A673 (cell line): ENCODE measurements at regions of chr17 and their contacts with region 1.

Region 1: GRCh38 chr17:14843086-14843795 is 421.9 kb downstream of the PMP22 start:
- DNase-seq: no peak
- H3K4me3 ChIP-seq: no peak overlapping the region
- H3K27ac ChIP-seq: no peak overlapping the region
- H3K4me1 ChIP-seq: no peaks in the 10 kb centered on the region
- H3K27me3 ChIP-seq: no peaks in the 10 kb centered on the region
- CTCF ChIP-seq: no peak

Region 2: DNA sequence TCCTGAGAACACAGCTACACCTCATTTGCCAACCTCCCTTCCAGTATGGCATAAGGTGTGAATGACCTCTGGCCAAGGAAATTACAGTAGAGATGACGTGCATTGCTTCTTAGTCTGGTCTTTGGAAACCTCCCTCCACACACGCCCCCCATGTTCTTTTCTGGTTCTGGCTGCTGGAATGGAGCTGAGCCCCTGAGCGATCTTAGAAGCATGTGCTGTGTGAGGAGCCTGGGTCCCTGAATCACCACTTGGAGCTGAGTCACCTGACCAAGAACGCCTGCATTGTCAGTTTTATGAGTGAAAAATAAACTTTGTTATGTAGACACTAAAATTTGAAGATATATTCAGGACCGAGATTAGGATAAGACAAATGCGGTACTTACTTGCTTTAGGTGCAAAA is 1293.0 kb before region 1 on chr17:
- CTCF ChIA-PET with region 1: no interaction called
- POLR2A ChIA-PET with region 1: interaction called, 14 read pairs
- intact Hi-C with region 1: no loop called
- DNase-seq: no peak
- H3K4me3 ChIP-seq: no peak overlapping the region
- H3K27ac ChIP-seq: no peak overlapping the region
- H3K4me1 ChIP-seq: no peaks in the 10 kb centered on the region
- H3K27me3 ChIP-seq: no peaks in the 10 kb centered on the region
- CTCF ChIP-seq: no peak